ENCODE measurements at regions of chr12 and their contacts with region 1.

Region 1: DNA sequence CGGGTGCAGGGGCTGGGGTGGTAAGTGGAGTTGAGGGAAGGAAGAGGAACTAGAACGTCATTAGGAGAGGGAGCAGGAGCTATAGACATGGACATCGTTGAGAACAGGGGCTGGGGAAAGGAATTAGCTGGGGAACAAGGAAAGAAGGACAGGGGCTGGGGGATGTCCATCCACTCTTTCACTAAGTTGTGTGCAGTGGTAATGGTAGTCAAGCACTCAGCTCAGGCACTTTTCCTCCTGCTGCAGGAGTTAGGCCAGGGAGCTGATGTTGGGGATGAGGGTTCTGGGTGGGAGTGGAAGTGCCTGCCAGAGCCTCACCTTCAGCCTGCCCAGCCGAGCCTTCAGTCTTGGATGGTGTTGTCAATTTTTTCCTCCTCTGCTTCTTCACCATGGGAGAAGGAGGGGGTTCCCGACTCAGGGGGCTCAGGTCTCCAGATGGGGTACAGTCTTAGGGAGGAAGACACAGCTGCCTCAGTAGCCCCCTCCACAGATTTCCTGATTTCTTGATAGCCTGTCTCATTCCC is 9.2 kb downstream of the AGAP2 start:
- DNase-seq: no peak
- ATAC-seq: no peak
- H3K4me3 Mint-ChIP-seq: no peak overlapping the region
- H3K27ac Mint-ChIP-seq: no peak overlapping the region
- H3K4me1 Mint-ChIP-seq: peaks cover 12% of the 10 kb centered on the region
- H3K27me3 Mint-ChIP-seq: no peaks in the 10 kb centered on the region
- CTCF ChIP-seq: no peak

Region 2: GRCh38 chr12:57058454-57058853 is 670.9 kb before region 1 on chr12:
- CTCF ChIA-PET with region 1: no interaction called
- POLR2A ChIA-PET with region 1: no interaction called
- intact Hi-C with region 1: no loop called
- DNase-seq: no peak
- ATAC-seq: peak; percentile 59
- H3K4me3 Mint-ChIP-seq: peak overlapping the region; percentile 50
- H3K27ac Mint-ChIP-seq: peak overlapping the region; percentile 84
- H3K4me1 Mint-ChIP-seq: peaks cover 61% of the 10 kb centered on the region
- H3K27me3 Mint-ChIP-seq: no peaks in the 10 kb centered on the region
- CTCF ChIP-seq: no peak

Region 3: DNA sequence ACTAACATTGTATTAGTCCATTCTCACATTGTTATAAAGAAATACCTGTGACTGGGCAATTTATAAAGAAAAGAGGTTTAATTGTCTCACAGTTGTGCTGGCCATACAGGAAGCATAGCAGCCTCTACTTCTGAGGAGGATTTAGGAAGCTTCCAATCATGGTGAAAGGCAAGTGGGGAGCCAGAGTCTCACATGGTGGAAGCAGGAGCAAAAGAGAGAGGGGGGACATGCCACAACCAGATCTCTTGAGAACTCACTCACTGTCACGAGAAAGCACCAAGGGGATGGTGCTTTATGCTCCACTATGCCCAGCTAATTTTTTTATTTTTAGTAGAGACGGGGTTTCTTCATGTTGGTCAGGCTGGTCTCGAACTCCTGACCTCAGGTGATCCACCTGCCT is 22.1 kb before region 1 on chr12:
- CTCF ChIA-PET with region 1: no interaction called
- POLR2A ChIA-PET with region 1: no interaction called
- intact Hi-C with region 1: loop called (anchors 1 kb)
- DNase-seq: no peak
- ATAC-seq: no peak
- H3K4me3 Mint-ChIP-seq: no peak overlapping the region
- H3K27ac Mint-ChIP-seq: no peak overlapping the region
- H3K4me1 Mint-ChIP-seq: peaks cover 10% of the 10 kb centered on the region
- H3K27me3 Mint-ChIP-seq: no peaks in the 10 kb centered on the region
- CTCF ChIP-seq: no peak

Region 4: GRCh38 chr12:58877242-58877743 is 1147.9 kb after region 1 on chr12:
- CTCF ChIA-PET with region 1: no interaction called
- POLR2A ChIA-PET with region 1: no interaction called
- intact Hi-C with region 1: no loop called
- DNase-seq: no peak
- ATAC-seq: no peak
- H3K4me3 Mint-ChIP-seq: no peak overlapping the region
- H3K27ac Mint-ChIP-seq: no peak overlapping the region
- H3K4me1 Mint-ChIP-seq: no peaks in the 10 kb centered on the region
- H3K27me3 Mint-ChIP-seq: no peaks in the 10 kb centered on the region
- CTCF ChIP-seq: no peak